ENCODE measurements at regions of chr21 and their contacts with region 1.

Region 1: GRCh38 chr21:25903602-25904001 is 168.8 kb downstream of the GABPA start:
- DNase-seq: no peak
- ATAC-seq: peak; percentile 97
- H3K4me3 Mint-ChIP-seq: peak overlapping the region; percentile 16
- H3K27ac Mint-ChIP-seq: peak overlapping the region; percentile 13
- H3K4me1 Mint-ChIP-seq: peaks cover 12% of the 10 kb centered on the region
- H3K27me3 Mint-ChIP-seq: no peaks in the 10 kb centered on the region
- CTCF ChIP-seq: no peak

Region 2: GRCh38 chr21:25967573-25968438 is 64.2 kb after region 1 on chr21:
- CTCF ChIA-PET with region 1: no interaction called
- POLR2A ChIA-PET with region 1: interaction called, 8 read pairs
- intact Hi-C with region 1: loop called (anchors 5 kb)
- DNase-seq: no peak
- ATAC-seq: peak; percentile 95
- H3K4me3 Mint-ChIP-seq: peak overlapping the region; percentile 24
- H3K27ac Mint-ChIP-seq: peak overlapping the region; percentile 93
- H3K4me1 Mint-ChIP-seq: peaks cover 32% of the 10 kb centered on the region
- H3K27me3 Mint-ChIP-seq: no peaks in the 10 kb centered on the region
- CTCF ChIP-seq: no peak

Region 3: DNA sequence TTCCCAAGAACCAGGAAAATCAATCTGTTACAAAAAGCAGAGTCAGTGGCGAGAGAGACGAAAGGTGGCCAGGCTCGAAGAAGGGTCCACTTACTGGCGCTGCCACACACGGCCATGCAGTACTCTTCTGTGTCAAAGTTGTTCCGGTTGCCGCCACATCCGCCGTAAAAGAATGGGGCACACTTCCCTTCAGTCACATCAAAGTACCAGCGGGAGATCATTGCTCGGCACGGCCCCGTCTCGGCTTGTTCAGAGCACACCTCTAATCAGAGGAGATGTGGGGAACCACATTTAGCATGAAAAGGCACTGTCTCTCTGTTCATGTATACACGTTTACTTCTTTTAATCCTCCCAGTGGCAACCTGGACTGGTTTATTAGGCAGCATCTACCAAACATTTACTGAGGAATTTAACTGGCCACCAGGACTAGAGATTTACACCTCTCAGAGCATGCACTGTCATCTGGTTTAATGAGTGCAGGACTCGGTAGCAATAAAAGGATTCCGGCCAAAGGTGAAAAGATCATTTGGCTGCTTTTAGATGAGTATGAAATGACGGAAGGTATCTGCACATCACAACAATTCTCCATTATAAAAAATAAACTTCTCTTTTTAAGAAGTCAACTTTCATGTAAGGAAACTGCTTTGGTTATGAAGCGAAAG is 96.5 kb after region 1 on chr21:
- CTCF ChIA-PET with region 1: no interaction called
- POLR2A ChIA-PET with region 1: no interaction called
- intact Hi-C with region 1: loop called (anchors 2 kb)
- DNase-seq: no peak
- ATAC-seq: no peak
- H3K4me3 Mint-ChIP-seq: peak overlapping the region; percentile 7
- H3K27ac Mint-ChIP-seq: no peak overlapping the region
- H3K4me1 Mint-ChIP-seq: peaks cover 4% of the 10 kb centered on the region
- H3K27me3 Mint-ChIP-seq: no peaks in the 10 kb centered on the region
- CTCF ChIP-seq: no peak

Region 4: DNA sequence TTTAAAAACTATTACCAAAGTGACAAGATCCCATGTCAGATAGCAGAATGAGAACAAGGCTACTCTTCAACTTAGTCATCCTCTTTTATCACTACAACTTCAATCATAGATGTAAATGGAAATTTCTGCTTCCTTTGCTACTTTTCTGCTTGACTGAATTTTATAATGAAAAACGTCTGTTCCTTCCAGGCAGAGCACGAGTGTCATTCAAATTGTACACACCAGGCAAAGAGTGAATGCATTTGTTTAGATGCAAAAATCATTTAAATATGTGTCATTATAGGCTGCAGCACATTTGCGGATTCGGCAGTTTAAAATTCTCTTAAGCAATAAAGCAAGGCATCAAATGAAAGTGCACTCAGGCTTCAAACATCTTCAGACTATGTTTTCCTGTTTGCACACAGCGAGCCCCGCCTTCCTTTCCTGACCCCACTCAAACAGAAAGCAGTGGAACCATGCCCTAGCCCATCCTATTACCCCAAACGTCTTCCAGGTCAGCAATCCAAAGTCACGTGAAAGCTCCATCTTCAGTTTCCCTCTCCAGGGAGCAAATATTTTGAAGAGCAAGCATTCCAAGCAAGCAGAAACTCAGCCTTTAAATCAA is 167.3 kb after region 1 on chr21:
- CTCF ChIA-PET with region 1: no interaction called
- POLR2A ChIA-PET with region 1: no interaction called
- intact Hi-C with region 1: loop called (anchors 2 kb)
- DNase-seq: no peak
- ATAC-seq: peak; percentile 82
- H3K4me3 Mint-ChIP-seq: peak overlapping the region; percentile 69
- H3K27ac Mint-ChIP-seq: peak overlapping the region; percentile 77
- H3K4me1 Mint-ChIP-seq: peaks cover 31% of the 10 kb centered on the region
- H3K27me3 Mint-ChIP-seq: no peaks in the 10 kb centered on the region
- CTCF ChIP-seq: no peak

Region 5: GRCh38 chr21:26865857-26866256 is 962.3 kb after region 1 on chr21:
- CTCF ChIA-PET with region 1: no interaction called
- POLR2A ChIA-PET with region 1: no interaction called
- intact Hi-C with region 1: no loop called
- DNase-seq: no peak
- ATAC-seq: no peak
- H3K4me3 Mint-ChIP-seq: no peak overlapping the region
- H3K27ac Mint-ChIP-seq: no peak overlapping the region
- H3K4me1 Mint-ChIP-seq: no peaks in the 10 kb centered on the region
- H3K27me3 Mint-ChIP-seq: no peaks in the 10 kb centered on the region
- CTCF ChIP-seq: no peak

Measured in activated B cell treated with CpG ODN at 0.5 μM for 24 hours (primary cell).